CD4-positive, alpha-beta memory T cell (primary cell): ENCODE measurements at regions of chr10 and their contacts with region 1.

Region 1: GRCh38 chr10:17029581-17030271 is 99.9 kb downstream of the CUBN start:
- DNase-seq: peak; percentile 65 to 90 (median 68)
- H3K4me3 ChIP-seq: peak overlapping the region in 1 of 2 donors; percentile 51
- H3K4me3 Mint-ChIP-seq: peak overlapping the region; percentile 81 to 86 (median 84)
- H3K27ac ChIP-seq: peak overlapping the region; percentile 90
- H3K27ac Mint-ChIP-seq: peak overlapping the region; percentile 95 to 97 (median 97)
- H3K4me1 ChIP-seq: peaks cover 90% of the 10 kb centered on the region
- H3K4me1 Mint-ChIP-seq: peaks cover 55 to 94% (median 77%) of the 10 kb centered on the region in 4 donors
- H3K27me3 ChIP-seq: no peaks in the 10 kb centered on the region
- H3K27me3 Mint-ChIP-seq: no peaks in the 10 kb centered on the region

Region 2: DNA sequence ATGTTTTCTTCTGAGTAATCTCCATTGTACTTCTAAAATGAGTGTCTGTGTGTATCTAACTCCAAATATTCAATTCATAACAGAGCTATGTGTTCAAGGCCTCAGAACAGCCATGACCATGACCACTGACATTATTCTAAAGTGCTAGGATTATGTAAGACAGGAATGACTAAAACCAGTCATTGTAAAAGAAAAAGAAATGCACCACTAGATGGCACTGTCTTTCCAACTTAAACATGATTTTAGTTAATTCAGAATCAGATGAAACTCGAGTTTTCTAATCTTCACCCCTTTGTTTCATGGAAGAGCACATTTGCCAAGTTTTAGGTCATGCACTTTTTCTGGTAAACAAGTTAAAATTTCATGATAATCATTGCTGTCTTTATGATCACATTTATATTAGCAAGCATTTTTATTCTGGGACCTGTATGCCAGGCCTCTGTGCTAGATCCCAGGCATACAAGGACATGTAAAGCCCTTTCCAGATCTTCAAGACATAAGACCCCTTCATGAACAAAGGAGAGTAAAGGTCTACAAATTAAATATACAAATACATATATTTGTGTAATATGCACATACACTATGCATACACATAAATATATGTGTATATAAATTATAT is 186.4 kb before region 1 on chr10:
- CTCF ChIA-PET with region 1: no interaction called
- POLR2A ChIA-PET with region 1: no interaction called
- intact Hi-C with region 1: loop called (anchors 5 kb)
- DNase-seq: peak in 4 of 5 donors; percentile 63 to 69 (median 67)
- H3K4me3 ChIP-seq: no peak overlapping the region
- H3K4me3 Mint-ChIP-seq: no peak overlapping the region
- H3K27ac ChIP-seq: no peak overlapping the region
- H3K27ac Mint-ChIP-seq: peak overlapping the region in 1 of 7 donors; percentile 31
- H3K4me1 ChIP-seq: no peaks in the 10 kb centered on the region
- H3K4me1 Mint-ChIP-seq: peaks cover 0 to 3% (median 0%) of the 10 kb centered on the region in 4 donors
- H3K27me3 ChIP-seq: no peaks in the 10 kb centered on the region
- H3K27me3 Mint-ChIP-seq: no peaks in the 10 kb centered on the region

Region 3: GRCh38 chr10:16945593-16945992 is 84.1 kb before region 1 on chr10:
- CTCF ChIA-PET with region 1: no interaction called
- POLR2A ChIA-PET with region 1: no interaction called
- intact Hi-C with region 1: loop called (anchors 5 kb)
- DNase-seq: no peak
- H3K4me3 ChIP-seq: no peak overlapping the region
- H3K4me3 Mint-ChIP-seq: no peak overlapping the region
- H3K27ac ChIP-seq: no peak overlapping the region
- H3K27ac Mint-ChIP-seq: peak overlapping the region in 2 of 7 donors; percentile 32 to 75
- H3K4me1 ChIP-seq: no peaks in the 10 kb centered on the region
- H3K4me1 Mint-ChIP-seq: peaks cover 5 to 9% (median 9%) of the 10 kb centered on the region in 4 donors
- H3K27me3 ChIP-seq: no peaks in the 10 kb centered on the region
- H3K27me3 Mint-ChIP-seq: no peaks in the 10 kb centered on the region

Region 4: GRCh38 chr10:17041626-17042520 is 12.1 kb after region 1 on chr10:
- CTCF ChIA-PET with region 1: no interaction called
- POLR2A ChIA-PET with region 1: interaction called, 3 read pairs
- intact Hi-C with region 1: loop called (anchors 1 kb)
- DNase-seq: no peak
- H3K4me3 ChIP-seq: no peak overlapping the region
- H3K4me3 Mint-ChIP-seq: no peak overlapping the region
- H3K27ac ChIP-seq: no peak overlapping the region
- H3K27ac Mint-ChIP-seq: peak overlapping the region in 3 of 7 donors; percentile 41 to 76 (median 64)
- H3K4me1 ChIP-seq: no peaks in the 10 kb centered on the region
- H3K4me1 Mint-ChIP-seq: no peaks in the 10 kb centered on the region
- H3K27me3 ChIP-seq: no peaks in the 10 kb centered on the region
- H3K27me3 Mint-ChIP-seq: no peaks in the 10 kb centered on the region

Region 5: GRCh38 chr10:17200912-17201793 is 171.4 kb after region 1 on chr10 and contains the start of gene TRDMT1:
- CTCF ChIA-PET with region 1: interaction called, 4 read pairs
- POLR2A ChIA-PET with region 1: interaction called, 10 read pairs
- intact Hi-C with region 1: no loop called
- DNase-seq: peak; percentile 79 to 84 (median 80)
- H3K4me3 ChIP-seq: peak within 1 kb of the TSS; percentile 72 to 89
- H3K4me3 Mint-ChIP-seq: peak within 1 kb of the TSS; percentile 91 to 98 (median 95)
- H3K27ac ChIP-seq: peak within 1 kb of the TSS; percentile 95
- H3K27ac Mint-ChIP-seq: peak within 1 kb of the TSS; percentile 98 to 99 (median 99)
- H3K4me1 ChIP-seq: peaks cover 27% of the 10 kb centered on the region
- H3K4me1 Mint-ChIP-seq: peaks cover 22 to 56% (median 40%) of the 10 kb centered on the region in 4 donors
- H3K27me3 ChIP-seq: no peaks in the 10 kb centered on the region
- H3K27me3 Mint-ChIP-seq: no peaks in the 10 kb centered on the region
- total RNA-seq, gene TRDMT1: 20.2 to 21.3 TPM